ENCODE measurements at regions of chr20 and their contacts with region 1.

Region 1: DNA sequence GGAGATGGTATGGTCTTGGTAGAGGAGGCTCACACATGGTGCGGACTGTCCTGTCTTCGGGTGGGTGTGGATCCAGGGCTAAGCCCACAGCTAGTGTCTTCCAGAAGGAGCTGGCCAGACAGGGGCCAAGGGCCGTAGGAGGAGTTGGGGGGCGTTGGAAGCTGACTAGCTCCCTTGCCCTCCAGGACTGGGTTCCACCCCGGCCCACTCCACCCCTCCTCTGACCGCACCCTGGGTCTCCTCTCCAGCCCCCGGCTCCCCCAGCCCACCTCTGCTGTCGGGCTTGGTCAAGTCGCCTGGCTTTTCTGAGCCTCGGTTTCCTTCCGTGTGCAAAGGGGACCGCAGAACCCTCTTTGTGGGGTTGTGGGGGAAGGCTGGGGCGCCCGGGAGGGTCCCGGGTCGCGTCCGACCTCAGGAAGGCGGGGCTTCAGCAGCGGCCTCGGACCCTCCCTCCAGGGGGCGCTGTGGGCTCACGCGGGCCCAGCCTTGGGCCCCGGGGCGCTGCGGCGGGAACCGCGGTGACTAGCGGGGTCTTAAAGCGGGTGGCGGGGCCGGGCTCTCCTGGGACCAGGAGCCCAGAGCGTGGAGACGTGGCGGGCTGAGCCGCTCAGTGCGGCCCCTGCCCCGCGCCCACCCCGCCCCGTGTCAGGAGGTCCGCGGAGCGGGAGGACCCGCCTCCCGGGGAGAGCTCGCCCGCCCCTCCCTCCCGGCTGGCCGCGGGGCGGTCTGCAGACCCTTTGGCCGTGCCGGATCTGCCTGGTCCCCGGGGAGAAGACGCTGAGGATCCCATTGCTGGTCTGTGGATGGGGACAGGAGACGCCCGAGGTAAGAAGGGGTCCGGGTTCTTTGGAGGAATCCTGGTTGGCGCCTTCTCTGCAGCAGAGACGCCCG is 5.4 kb downstream of the NPBWR2 start:
- DNase-seq: peak; percentile 85
- ATAC-seq: peak; percentile 81
- H3K4me3 Mint-ChIP-seq: peak overlapping the region; percentile 58
- H3K27ac Mint-ChIP-seq: no peak overlapping the region
- H3K4me1 Mint-ChIP-seq: peaks cover 23% of the 10 kb centered on the region
- H3K27me3 Mint-ChIP-seq: peaks cover 13% of the 10 kb centered on the region

Region 2: DNA sequence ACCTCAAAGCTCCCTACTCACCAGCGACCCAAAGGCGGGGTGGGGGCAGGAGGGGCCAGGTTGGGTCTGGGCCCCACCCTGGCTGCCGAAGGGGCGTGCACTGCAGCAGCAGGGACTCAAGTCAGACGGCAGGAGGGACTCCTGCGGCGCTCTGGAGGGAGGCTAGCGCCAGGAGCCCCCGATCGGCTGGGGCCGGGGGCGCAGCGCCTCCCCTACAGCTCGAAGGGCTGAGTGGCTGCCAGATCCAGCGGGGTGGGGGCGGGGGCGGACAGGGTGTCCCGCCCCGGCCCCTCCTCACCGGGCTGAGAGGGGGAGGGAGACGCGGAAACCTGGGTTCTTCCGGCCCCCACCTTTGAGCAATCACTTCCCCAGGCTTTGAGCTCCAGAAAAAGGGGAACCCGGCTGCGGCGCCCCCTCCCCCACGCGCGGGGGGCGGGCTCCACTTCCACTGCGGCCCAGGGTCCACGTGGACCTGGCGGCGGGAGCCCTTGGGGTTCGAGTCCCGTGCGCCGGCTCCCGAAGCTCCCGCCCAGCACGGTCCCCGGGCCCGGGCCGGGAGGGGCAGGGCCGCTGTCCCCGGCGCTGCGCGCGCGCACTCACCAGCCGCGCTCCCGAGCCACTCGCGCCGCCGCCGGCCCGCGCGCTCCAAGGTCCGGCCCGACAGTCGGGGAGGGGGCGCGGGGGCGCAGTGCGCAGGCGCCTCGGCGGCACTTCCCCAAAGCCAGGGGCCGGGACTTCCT is 22.5 kb before region 1 on chr20 and contains the start of gene RGS19:
- CTCF ChIA-PET with region 1: interaction called, 12 read pairs
- POLR2A ChIA-PET with region 1: no interaction called
- intact Hi-C with region 1: no loop called
- DNase-seq: peak; percentile 77
- ATAC-seq: peak; percentile 43
- H3K4me3 Mint-ChIP-seq: peak within 1 kb of the TSS; percentile 90
- H3K27ac Mint-ChIP-seq: peak within 1 kb of the TSS; percentile 88
- H3K4me1 Mint-ChIP-seq: peaks cover 28% of the 10 kb centered on the region
- H3K27me3 Mint-ChIP-seq: peaks cover 3% of the 10 kb centered on the region
- total RNA-seq, gene RGS19: 39.6 to 40.2 TPM

Measured in activated CD4-positive, alpha-beta T cell treated with anti-CD3 and anti-CD28 coated beads for 36 hours (primary cell).